Tibial artery (tissue), 4 donors: ENCODE measurements at regions of chr1 and their contacts with region 1.

Region 1: DNA sequence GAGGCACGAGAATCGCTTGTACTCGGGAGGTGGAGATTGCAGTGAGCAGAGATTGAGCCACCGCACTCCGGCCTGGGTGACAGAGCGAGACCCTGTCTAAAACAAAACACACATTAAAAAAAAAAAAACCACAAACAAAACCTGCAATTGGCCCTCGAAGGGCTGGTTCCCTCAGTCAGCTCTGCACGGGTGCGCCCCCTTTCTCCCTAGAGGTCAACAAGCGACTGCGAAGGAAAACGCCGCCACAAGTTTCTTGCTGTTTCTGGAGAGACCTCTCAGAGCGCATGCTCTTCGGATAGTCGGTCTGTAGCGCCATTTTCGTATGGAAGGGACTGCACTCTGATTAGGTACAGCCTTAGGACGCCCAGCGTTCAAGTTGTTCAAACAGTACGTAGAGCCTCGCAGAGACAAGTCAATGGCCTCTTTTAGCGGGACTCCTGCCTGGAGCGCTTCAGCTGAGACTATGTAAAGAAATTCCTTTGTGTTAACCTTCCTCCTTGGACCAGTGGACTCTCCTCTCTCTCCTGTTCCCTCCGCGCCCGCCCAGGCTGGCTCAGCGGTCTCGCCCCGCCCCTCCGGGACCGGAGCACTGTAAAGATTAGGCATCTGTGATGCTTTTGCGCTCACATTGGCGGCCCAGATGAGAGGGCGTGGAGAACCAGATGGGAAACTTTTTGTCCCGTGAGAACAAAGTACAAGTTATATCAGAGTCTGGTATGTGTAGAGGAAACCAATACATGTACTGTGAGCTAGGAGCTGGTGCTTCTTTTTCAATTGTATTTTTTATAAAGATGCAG is 1.0 kb upstream of the CDC14A start:
- DNase-seq: peak; percentile 89 to 92
- H3K4me3 ChIP-seq: peak overlapping the region; percentile 80 to 92
- H3K27ac ChIP-seq: peak overlapping the region; percentile 75 to 89
- H3K4me1 ChIP-seq: peaks cover 0 to 14% (median 0%) of the 10 kb centered on the region in 4 donors
- H3K27me3 ChIP-seq: no peaks in the 10 kb centered on the region
- CTCF ChIP-seq: peak in 1 of 2 experiments; percentile 7

Region 2: DNA sequence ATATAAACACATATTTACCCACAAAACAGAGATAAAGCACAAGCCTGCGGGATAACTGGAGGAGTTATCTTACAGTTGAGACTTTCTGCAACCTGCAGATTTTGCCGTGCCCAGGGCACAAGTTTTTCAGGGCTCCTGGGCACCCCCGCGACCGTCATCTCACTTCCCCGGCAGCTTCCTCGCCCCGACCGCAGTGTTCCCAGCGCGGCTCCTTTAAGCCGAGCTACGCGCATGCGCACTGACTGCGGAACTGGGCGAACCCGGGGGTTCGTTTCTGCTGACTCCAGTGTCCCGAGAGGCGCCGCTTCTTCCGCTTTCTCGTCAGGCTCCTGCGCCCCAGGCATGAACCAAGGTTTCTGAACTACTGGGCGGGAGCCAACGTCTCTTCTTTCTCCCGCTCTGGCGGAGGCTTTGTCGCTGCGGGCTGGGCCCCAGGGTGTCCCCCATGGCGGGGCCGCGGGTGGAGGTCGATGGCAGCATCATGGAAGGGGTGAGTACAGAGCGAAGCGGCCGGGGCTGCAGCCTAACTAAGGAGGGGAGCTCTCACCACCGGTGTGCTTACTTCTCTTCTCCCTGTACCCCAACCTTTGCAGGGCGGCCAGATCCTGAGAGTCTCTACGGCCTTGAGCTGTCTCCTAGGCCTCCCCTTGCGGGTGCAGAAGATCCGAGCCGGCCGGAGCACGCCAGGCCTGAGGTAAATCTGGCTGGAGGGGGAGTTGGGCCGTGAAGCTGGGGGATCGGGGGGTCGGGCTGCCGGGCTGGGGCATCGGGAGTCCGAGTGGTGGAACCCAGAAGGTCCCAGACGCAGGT is 85.2 kb before region 1 on chr1 and contains the start of gene RTCA:
- intact Hi-C with region 1: loop called (anchors 5 kb)
- DNase-seq: peak; percentile 97
- H3K4me3 ChIP-seq: peak within 1 kb of the TSS; percentile 74 to 99
- H3K27ac ChIP-seq: peak within 1 kb of the TSS; percentile 72 to 90
- H3K4me1 ChIP-seq: peaks cover 0 to 37% (median 19%) of the 10 kb centered on the region in 4 donors
- H3K27me3 ChIP-seq: no peaks in the 10 kb centered on the region
- CTCF ChIP-seq: no peak